ENCODE measurements at regions of chr11 and their contacts with region 1.

Region 1: GRCh38 chr11:75554258-75555022 is 7.6 kb upstream of the SERPINH1 start:
- DNase-seq: peak; percentile 99
- H3K4me3 ChIP-seq: no peak overlapping the region
- H3K27ac ChIP-seq: peak overlapping the region; percentile 37
- H3K4me1 ChIP-seq: peaks cover 29% of the 10 kb centered on the region
- H3K27me3 ChIP-seq: no peaks in the 10 kb centered on the region
- CTCF ChIP-seq: no peak
- POLR2A ChIP-seq: peak; percentile 38

Region 2: DNA sequence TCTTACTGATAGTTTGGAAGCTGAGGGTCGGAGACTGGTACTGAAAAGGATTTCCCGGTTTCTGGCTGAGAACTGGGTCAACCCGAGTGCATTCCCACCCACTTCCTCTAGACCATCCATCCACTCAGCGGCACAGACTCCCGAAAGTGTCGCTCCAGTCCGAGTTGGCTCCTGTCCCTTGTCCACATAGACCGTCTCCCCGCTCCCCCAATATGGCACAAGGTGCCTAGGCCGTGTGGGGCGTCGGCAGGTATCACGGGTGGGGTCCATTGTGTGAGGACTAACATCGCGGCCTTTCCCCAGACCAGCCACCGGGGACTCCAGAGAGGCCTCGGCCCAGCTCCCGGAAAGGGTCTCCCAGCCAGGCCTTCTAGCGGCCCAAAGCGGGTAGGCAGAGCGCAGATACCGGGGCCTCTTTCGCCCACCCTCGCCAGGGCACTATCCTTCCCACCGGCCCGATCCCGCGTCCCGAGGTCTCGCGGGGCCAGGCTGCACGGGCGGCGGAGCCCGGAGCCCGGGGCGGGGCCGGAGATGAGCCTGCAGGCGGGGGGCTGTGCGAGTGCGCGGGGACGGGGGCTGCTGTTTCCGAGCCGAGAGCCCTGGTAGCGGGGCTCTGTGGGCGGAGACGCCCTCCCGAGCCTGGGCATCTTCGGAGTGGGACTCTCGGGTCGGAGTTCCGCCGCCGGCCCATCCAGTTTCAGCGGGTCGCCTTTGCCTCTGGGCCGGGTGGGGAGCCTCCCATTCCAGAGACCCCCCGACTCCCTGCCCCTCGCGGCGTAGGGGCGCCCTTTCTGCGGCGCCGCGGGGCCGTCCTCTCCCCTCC is 28.7 kb after region 1 on chr11:
- CTCF ChIA-PET with region 1: interaction called, 107 read pairs
- POLR2A ChIA-PET with region 1: interaction called, 7 read pairs
- dilution Hi-C with region 1: no loop called
- intact Hi-C with region 1: loop called (anchors 1 kb)
- DNase-seq: peak; percentile 84
- H3K4me3 ChIP-seq: peak overlapping the region; percentile 17 to 62 (median 38)
- H3K27ac ChIP-seq: peak overlapping the region; percentile 94
- H3K4me1 ChIP-seq: peaks cover 21% of the 10 kb centered on the region
- H3K27me3 ChIP-seq: no peaks in the 10 kb centered on the region
- CTCF ChIP-seq: peak; percentile 9 to 20
- POLR2A ChIP-seq: peak; percentile 69

Region 3: GRCh38 chr11:75603791-75604736 is 49.6 kb after region 1 on chr11:
- CTCF ChIA-PET with region 1: no interaction called
- POLR2A ChIA-PET with region 1: no interaction called
- dilution Hi-C with region 1: no loop called
- intact Hi-C with region 1: no loop called
- DNase-seq: peak; percentile 92
- H3K4me3 ChIP-seq: peak overlapping the region in 1 of 3 experiments; percentile 40
- H3K27ac ChIP-seq: peak overlapping the region; percentile 88
- H3K4me1 ChIP-seq: peaks cover 24% of the 10 kb centered on the region
- H3K27me3 ChIP-seq: no peaks in the 10 kb centered on the region
- CTCF ChIP-seq: no peak
- POLR2A ChIP-seq: peak; percentile 49

Region 4: DNA sequence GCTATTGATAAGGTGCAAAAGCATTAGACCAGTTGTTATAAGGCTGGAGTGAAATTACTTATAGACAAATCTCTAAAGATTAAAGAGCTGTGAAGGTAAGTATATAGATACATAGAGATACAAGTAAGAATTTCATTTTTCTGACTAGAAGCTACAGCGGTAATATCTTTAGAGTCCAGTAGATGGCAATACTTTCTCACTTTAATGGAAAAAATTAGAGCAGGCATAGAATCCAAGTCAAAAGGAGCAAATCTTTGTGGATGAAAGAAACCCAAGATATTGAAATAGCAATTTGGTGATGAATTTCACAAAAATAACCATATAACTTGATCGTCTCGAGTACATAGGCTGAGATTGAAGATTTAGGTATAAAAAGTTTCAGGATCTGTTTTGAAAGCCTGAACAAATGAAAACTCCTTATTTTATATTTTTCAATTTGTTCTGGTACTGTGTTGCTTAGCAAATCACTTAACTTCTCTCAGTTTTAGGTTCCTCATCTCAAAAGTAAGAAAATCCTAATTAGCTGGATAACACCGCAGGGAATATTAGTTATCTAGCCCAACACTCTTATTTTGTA is 342.5 kb after region 1 on chr11:
- CTCF ChIA-PET with region 1: no interaction called
- POLR2A ChIA-PET with region 1: no interaction called
- dilution Hi-C with region 1: no loop called
- intact Hi-C with region 1: no loop called
- DNase-seq: peak; percentile 63
- H3K4me3 ChIP-seq: no peak overlapping the region
- H3K27ac ChIP-seq: no peak overlapping the region
- H3K4me1 ChIP-seq: no peaks in the 10 kb centered on the region
- H3K27me3 ChIP-seq: no peaks in the 10 kb centered on the region
- CTCF ChIP-seq: peak; percentile 31 to 35
- POLR2A ChIP-seq: no peak

Measured in endothelial cell of umbilical vein (primary cell).